Keratinocyte (primary cell): ENCODE measurements at regions of chrX and their contacts with region 1.

Region 1: DNA sequence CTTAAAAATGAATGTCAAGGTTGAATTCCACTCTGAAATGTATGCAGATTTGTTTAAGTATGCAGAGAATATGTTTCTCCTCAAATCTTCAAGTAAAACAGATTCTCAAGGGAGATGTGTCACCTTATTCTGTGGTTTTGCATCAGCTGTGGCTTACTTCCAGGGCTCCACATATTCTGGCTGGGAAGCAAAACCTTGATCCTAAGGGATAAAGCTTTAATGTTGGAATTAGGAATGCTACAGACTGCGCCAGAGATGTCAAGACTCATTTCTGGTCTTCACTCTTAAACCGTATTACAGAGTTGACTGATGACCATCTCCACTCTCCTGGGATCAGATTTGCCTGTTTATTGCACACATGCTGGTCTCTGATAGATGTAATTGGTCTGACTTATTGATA is 143.9 kb upstream of the DIPK2B start:
- DNase-seq: no peak
- H3K4me3 ChIP-seq: no peak overlapping the region
- H3K27ac ChIP-seq: no peak overlapping the region
- H3K4me1 ChIP-seq: no peaks in the 10 kb centered on the region
- H3K27me3 ChIP-seq: no peaks in the 10 kb centered on the region
- CTCF ChIP-seq: no peak

Region 2: GRCh38 chrX:44542567-44543325 is 801.8 kb before region 1 on chrX and contains the start of gene FUNDC1:
- dilution Hi-C with region 1: no loop called
- DNase-seq: peak; percentile 91
- H3K4me3 ChIP-seq: peak within 1 kb of the TSS; percentile 66 to 85 (median 81)
- H3K27ac ChIP-seq: peak within 1 kb of the TSS; percentile 86
- H3K4me1 ChIP-seq: peaks cover 6% of the 10 kb centered on the region
- H3K27me3 ChIP-seq: no peaks in the 10 kb centered on the region
- CTCF ChIP-seq: peak; percentile 23 to 46 (median 33)
- polyA plus RNA-seq, gene FUNDC1: 20.9 to 30.9 TPM (median 21.6 TPM) in 3 replicates

Region 3: DNA sequence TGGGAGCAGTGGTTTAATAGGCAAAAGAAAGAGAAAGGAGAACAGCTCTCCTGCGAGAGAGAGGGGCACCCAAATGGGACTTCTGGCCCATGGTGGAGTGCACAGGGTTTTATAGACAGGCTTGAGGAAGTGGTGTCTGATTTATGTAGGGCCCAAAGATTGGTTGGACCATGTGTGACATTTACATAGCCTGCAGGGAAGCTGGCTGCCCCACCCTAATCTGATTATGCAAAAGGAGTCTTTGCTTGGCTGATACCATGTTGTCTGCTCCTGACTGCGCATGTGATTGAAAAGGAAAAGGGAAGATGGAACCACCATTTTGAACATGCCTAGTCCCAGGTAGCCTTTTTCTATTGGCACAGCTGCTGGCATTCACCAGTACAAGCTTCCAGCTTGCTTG is 44.0 kb before region 1 on chrX:
- dilution Hi-C with region 1: no loop called
- DNase-seq: no peak
- H3K4me3 ChIP-seq: no peak overlapping the region
- H3K27ac ChIP-seq: no peak overlapping the region
- H3K4me1 ChIP-seq: no peaks in the 10 kb centered on the region
- H3K27me3 ChIP-seq: peaks cover 6% of the 10 kb centered on the region
- CTCF ChIP-seq: no peak

Region 4: GRCh38 chrX:45743081-45743533 is 398.5 kb after region 1 on chrX:
- dilution Hi-C with region 1: loop called (anchors 25 kb)
- DNase-seq: peak; percentile 65
- H3K4me3 ChIP-seq: no peak overlapping the region
- H3K27ac ChIP-seq: peak overlapping the region; percentile 44
- H3K4me1 ChIP-seq: peaks cover 30% of the 10 kb centered on the region
- H3K27me3 ChIP-seq: no peaks in the 10 kb centered on the region
- CTCF ChIP-seq: peak; percentile 51 to 76 (median 70)